ENCODE measurements at regions of chr6 and their contacts with region 1.

Region 1: GRCh38 chr6:111483736-111484632 is 966 bp upstream of the REV3L start:
- DNase-seq: peak in 6 of 9 experiments; percentile 56 to 93 (median 78)
- ATAC-seq: peak; percentile 24
- H3K4me3 ChIP-seq: peak overlapping the region; percentile 88 to 92
- H3K4me3 Mint-ChIP-seq: peak overlapping the region; percentile 99
- H3K27ac ChIP-seq: peak overlapping the region; percentile 89 to 91
- H3K27ac Mint-ChIP-seq: peak overlapping the region; percentile 99
- H3K4me1 ChIP-seq: peaks cover 12% of the 10 kb centered on the region
- H3K4me1 Mint-ChIP-seq: peaks cover 45% of the 10 kb centered on the region
- H3K27me3 ChIP-seq: no peaks in the 10 kb centered on the region
- H3K27me3 Mint-ChIP-seq: no peaks in the 10 kb centered on the region
- CTCF ChIP-seq: no peak

Region 2: GRCh38 chr6:111087106-111087835 is 396.7 kb before region 1 on chr6 and contains the start of gene SLC16A10:
- CTCF ChIA-PET with region 1: no interaction called
- POLR2A ChIA-PET with region 1: no interaction called
- intact Hi-C with region 1: loop called in 1 of 2 experiments (anchors 2 kb)
- DNase-seq: peak; percentile 70 to 92 (median 83)
- ATAC-seq: peak; percentile 86
- H3K4me3 ChIP-seq: peak within 1 kb of the TSS; percentile 56 to 70
- H3K4me3 Mint-ChIP-seq: peak within 1 kb of the TSS; percentile 96
- H3K27ac ChIP-seq: peak within 1 kb of the TSS; percentile 44 to 55
- H3K27ac Mint-ChIP-seq: peak within 1 kb of the TSS; percentile 96
- H3K4me1 ChIP-seq: peaks cover 25% of the 10 kb centered on the region
- H3K4me1 Mint-ChIP-seq: peaks cover 46% of the 10 kb centered on the region
- H3K27me3 ChIP-seq: no peaks in the 10 kb centered on the region
- H3K27me3 Mint-ChIP-seq: peaks cover 2% of the 10 kb centered on the region
- CTCF ChIP-seq: no peak
- total RNA-seq, gene SLC16A10: 15.7 to 18.5 TPM

Region 3: GRCh38 chr6:111565326-111566221 is 81.6 kb after region 1 on chr6:
- CTCF ChIA-PET with region 1: interaction called, 3 read pairs
- POLR2A ChIA-PET with region 1: interaction called, 3 read pairs
- intact Hi-C with region 1: loop called in 1 of 2 experiments (anchors 2 kb)
- DNase-seq: peak in 2 of 9 experiments; percentile 22 to 44
- ATAC-seq: peak; percentile 71
- H3K4me3 ChIP-seq: no peak overlapping the region
- H3K4me3 Mint-ChIP-seq: no peak overlapping the region
- H3K27ac ChIP-seq: no peak overlapping the region
- H3K27ac Mint-ChIP-seq: no peak overlapping the region
- H3K4me1 ChIP-seq: peaks cover 23% of the 10 kb centered on the region
- H3K4me1 Mint-ChIP-seq: peaks cover 42% of the 10 kb centered on the region
- H3K27me3 ChIP-seq: no peaks in the 10 kb centered on the region
- H3K27me3 Mint-ChIP-seq: no peaks in the 10 kb centered on the region
- CTCF ChIP-seq: no peak

Region 4: GRCh38 chr6:111894272-111894671 is 410.3 kb after region 1 on chr6:
- CTCF ChIA-PET with region 1: no interaction called
- POLR2A ChIA-PET with region 1: no interaction called
- intact Hi-C with region 1: no loop called
- DNase-seq: no peak
- ATAC-seq: no peak
- H3K4me3 ChIP-seq: no peak overlapping the region
- H3K4me3 Mint-ChIP-seq: no peak overlapping the region
- H3K27ac ChIP-seq: no peak overlapping the region
- H3K27ac Mint-ChIP-seq: no peak overlapping the region
- H3K4me1 ChIP-seq: no peaks in the 10 kb centered on the region
- H3K4me1 Mint-ChIP-seq: no peaks in the 10 kb centered on the region
- H3K27me3 ChIP-seq: no peaks in the 10 kb centered on the region
- H3K27me3 Mint-ChIP-seq: no peaks in the 10 kb centered on the region
- CTCF ChIP-seq: no peak

Region 5: GRCh38 chr6:111997078-111997852 is 513.3 kb after region 1 on chr6:
- CTCF ChIA-PET with region 1: no interaction called
- POLR2A ChIA-PET with region 1: no interaction called
- intact Hi-C with region 1: loop called in 1 of 2 experiments (anchors 1 kb)
- DNase-seq: peak; percentile 59 to 91 (median 82)
- ATAC-seq: peak; percentile 71
- H3K4me3 ChIP-seq: peak overlapping the region in 1 of 2 experiments; percentile 13
- H3K4me3 Mint-ChIP-seq: peak overlapping the region; percentile 71
- H3K27ac ChIP-seq: no peak overlapping the region
- H3K27ac Mint-ChIP-seq: peak overlapping the region; percentile 89
- H3K4me1 ChIP-seq: peaks cover 37% of the 10 kb centered on the region
- H3K4me1 Mint-ChIP-seq: peaks cover 45% of the 10 kb centered on the region
- H3K27me3 ChIP-seq: no peaks in the 10 kb centered on the region
- H3K27me3 Mint-ChIP-seq: no peaks in the 10 kb centered on the region
- CTCF ChIP-seq: peak; percentile 98

Measured in CD8-positive, alpha-beta T cell (primary cell).